Mucosa of descending colon (tissue), 3 donors: ENCODE measurements at regions of chr10 and their contacts with region 1.

Region 1: GRCh38 chr10:80662577-80663261 is 125.0 kb downstream of the SH2D4B start:
- DNase-seq: peak; percentile 74 to 92 (median 90)
- ATAC-seq: peak; percentile 92
- H3K4me3 ChIP-seq: no peak overlapping the region
- H3K4me1 ChIP-seq: peaks cover 2% of the 10 kb centered on the region
- CTCF ChIP-seq: peak; percentile 75

Region 2: GRCh38 chr10:80518807-80519360 is 143.8 kb before region 1 on chr10:
- intact Hi-C with region 1: no loop called
- DNase-seq: no peak
- ATAC-seq: peak; percentile 5
- H3K4me3 ChIP-seq: no peak overlapping the region
- H3K4me1 ChIP-seq: no peaks in the 10 kb centered on the region
- CTCF ChIP-seq: no peak

Region 3: GRCh38 chr10:80924063-80924952 is 261.6 kb after region 1 on chr10:
- intact Hi-C with region 1: loop called in 1 of 2 experiments (anchors 10 kb)
- DNase-seq: peak in 1 of 3 donors; percentile 84
- ATAC-seq: peak; percentile 55
- H3K4me3 ChIP-seq: no peak overlapping the region
- H3K4me1 ChIP-seq: no peaks in the 10 kb centered on the region
- CTCF ChIP-seq: no peak